Motor neuron (in vitro differentiated cells): ENCODE measurements at regions of chr1 and their contacts with region 1.

Region 1: DNA sequence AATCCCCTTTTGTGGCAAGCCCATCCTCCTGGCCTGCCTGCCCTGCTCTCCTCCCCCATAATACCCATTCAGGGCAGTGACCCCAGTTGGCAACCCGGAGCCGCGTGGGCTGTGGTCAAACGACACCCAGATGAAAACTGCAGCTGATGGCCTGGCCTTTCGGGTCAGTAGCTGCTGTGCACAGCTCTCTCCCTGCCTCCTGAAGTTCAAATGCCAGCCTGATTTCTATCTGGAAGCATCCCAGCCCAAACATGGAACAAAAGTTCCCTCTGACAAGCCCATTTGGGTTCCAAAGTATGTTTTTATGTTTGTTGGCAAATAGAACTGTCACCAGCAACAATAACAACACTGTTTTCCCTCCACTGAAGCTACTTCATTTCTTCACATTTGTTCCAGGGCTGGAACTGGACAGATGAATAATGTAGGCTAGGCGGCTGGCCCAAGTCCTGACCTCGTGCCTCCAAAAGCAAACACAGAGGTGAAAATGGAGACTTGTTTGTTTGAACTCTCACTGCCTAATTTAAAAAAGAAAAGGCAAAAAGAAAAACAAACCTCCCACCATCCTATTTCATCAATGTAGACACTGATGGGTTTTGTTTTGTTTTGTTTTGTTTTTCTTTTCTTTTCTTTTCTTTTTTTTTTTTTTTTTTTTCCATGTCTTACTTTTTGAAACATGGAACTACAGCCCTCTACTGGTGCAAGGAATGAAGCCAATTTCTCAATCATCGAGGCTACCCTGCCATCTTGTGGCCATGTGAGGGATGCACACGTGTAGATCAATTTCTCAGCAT is 179.0 kb downstream of the ADSS2 start:
- ATAC-seq: peak; percentile 28 to 87 (median 76)
- H3K4me3 ChIP-seq: no peak overlapping the region
- H3K27ac ChIP-seq: no peak overlapping the region
- H3K4me1 ChIP-seq: peaks cover 0 to 8% of the 10 kb centered on the region in 2 donors

Region 2: DNA sequence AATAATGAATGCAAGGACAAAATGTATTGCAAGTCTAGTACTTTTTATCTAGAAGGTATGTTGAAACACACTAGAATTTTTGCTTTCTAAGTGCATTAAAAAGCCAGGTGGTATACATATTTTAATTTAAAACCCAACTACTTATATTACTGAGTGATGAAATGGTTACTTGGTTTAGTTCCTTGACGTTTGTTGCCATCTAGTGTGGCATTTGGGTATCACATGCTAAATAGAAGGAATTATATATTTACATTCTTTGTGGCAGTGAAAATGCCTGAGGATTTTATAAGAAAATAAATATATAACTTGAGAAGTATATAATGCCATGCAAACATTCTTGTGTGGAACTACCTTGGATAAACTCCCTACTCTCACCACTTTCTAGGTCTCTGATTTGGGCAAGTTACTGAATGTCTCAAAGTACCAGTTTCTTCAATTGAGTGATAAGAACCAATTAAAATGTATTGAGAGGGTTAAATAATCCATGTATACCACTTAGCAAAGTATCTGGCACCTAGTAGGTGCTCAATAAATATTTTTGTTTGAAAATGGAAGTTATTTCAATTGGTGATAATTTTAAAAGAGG is 947.3 kb before region 1 on chr1:
- in situ Hi-C with region 1: loop called in 5 of 9 experiments (anchors 25 kb)
- ATAC-seq: peak in 3 of 8 experiments; percentile 45 to 72 (median 47)
- H3K4me3 ChIP-seq: no peak overlapping the region
- H3K27ac ChIP-seq: no peak overlapping the region
- H3K4me1 ChIP-seq: no peaks in the 10 kb centered on the region

Region 3: DNA sequence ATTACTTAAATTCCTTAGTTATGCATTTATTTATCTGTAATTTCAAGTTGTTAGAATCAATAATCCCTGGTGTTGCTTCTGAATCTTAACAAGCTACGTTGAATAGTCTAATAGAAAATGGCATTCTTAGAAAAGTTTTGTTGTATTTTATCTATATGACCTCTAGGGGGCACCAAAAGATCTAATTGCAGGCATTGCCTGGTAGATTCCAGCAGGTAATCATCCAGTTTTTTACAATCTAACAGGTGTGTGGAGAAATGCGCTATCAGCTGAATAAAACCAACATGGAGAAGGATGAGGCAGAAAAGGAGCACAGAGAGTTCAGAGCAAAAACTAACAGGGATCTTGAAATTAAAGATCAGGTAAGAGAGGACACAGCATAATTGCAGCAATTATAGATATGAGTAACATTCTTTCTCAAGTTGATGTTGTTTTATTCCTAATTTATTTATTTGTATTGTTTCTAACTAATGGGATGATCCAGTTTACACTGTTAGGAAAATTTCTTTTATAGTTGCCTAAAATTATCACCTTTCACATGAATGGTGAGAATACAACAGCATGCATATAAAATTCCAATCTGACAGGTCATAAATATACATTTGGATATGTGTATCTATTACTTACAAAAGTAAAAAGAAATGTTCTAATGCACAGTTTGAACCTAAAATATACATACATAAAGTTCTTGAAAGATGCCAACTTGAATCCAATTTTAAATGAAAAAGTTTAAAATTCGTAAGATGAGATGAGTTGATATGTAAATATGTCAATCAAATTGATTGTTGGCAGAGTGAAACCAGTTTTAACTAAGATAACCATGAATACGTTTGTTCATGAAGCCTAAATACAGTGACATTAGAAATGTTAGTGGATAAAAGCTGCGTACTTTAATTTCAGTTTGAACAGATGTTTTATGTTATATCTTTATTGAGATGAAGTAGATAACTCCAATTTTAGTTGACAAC is 928.4 kb before region 1 on chr1:
- in situ Hi-C with region 1: loop called in 8 of 9 experiments (anchors 10 to 25 kb)
- ATAC-seq: peak in 6 of 8 experiments; percentile 24 to 49 (median 42)
- H3K4me3 ChIP-seq: no peak overlapping the region
- H3K27ac ChIP-seq: no peak overlapping the region
- H3K4me1 ChIP-seq: peaks cover 13 to 17% of the 10 kb centered on the region in 2 donors

Region 4: GRCh38 chr1:243713470-243714186 is 559.0 kb before region 1 on chr1:
- in situ Hi-C with region 1: loop called in 2 of 9 experiments (anchors 25 kb)
- ATAC-seq: peak; percentile 86 to 98 (median 96)
- H3K4me3 ChIP-seq: peak overlapping the region; percentile 7 to 28 (median 19)
- H3K27ac ChIP-seq: peak overlapping the region in 1 of 2 donors; percentile 57
- H3K4me1 ChIP-seq: peaks cover 28 to 29% of the 10 kb centered on the region in 2 donors

Region 5: GRCh38 chr1:244049162-244050005 is 223.3 kb before region 1 on chr1:
- in situ Hi-C with region 1: loop called in 4 of 9 experiments (anchors 25 kb)
- ATAC-seq: peak in 5 of 8 experiments; percentile 1 to 9 (median 2)
- H3K4me3 ChIP-seq: peak overlapping the region; percentile 57 to 98 (median 77)
- H3K27ac ChIP-seq: peak overlapping the region; percentile 96 to 97
- H3K4me1 ChIP-seq: peaks cover 18 to 24% of the 10 kb centered on the region in 2 donors